ENCODE measurements at regions of chr6 and their contacts with region 1.

Region 1: DNA sequence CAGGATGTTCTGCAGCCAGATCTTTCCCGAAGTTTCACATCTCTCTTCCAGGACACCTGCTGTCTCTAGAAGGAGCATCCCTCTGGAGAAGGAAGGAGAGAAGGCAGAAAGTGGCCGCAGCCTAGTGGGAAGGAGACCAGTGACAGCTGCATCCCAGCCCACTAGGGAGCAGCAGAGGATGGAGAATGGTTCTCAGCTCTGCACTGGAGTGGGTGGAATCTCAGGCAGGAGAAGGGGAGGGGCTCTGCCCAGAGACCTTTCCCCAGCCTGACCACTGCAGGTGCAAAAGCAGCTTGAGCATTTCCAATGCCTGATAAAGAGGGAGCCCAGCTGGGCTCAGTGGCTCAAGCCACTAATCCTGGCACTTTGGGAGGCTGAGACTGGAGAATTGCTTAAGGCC is 32.3 kb downstream of the NCR2 start:
- DNase-seq: no peak
- H3K4me3 ChIP-seq: no peak overlapping the region
- H3K27me3 ChIP-seq: peaks cover 8% of the 10 kb centered on the region
- CTCF ChIP-seq: peak; percentile 82

Region 2: GRCh38 chr6:41027799-41028628 is 339.7 kb before region 1 on chr6:
- CTCF ChIA-PET with region 1: no interaction called
- POLR2A ChIA-PET with region 1: no interaction called
- DNase-seq: no peak
- H3K4me3 ChIP-seq: peak overlapping the region; percentile 30
- H3K27me3 ChIP-seq: peaks cover 2% of the 10 kb centered on the region; the same call in 1 of the 2 replicates
- CTCF ChIP-seq: peak; percentile 87

Region 3: GRCh38 chr6:41228616-41229015 is 139.1 kb before region 1 on chr6:
- CTCF ChIA-PET with region 1: no interaction called
- POLR2A ChIA-PET with region 1: no interaction called
- DNase-seq: no peak
- H3K4me3 ChIP-seq: no peak overlapping the region
- H3K27me3 ChIP-seq: no peaks in the 10 kb centered on the region; the same call in 1 of the 2 replicates
- CTCF ChIP-seq: no peak

Region 4: GRCh38 chr6:41352396-41352795 is 15.3 kb before region 1 on chr6:
- CTCF ChIA-PET with region 1: interaction called, 12 read pairs
- POLR2A ChIA-PET with region 1: no interaction called
- DNase-seq: no peak
- H3K4me3 ChIP-seq: no peak overlapping the region
- H3K27me3 ChIP-seq: peaks cover 7% of the 10 kb centered on the region
- CTCF ChIP-seq: no peak

Region 5: DNA sequence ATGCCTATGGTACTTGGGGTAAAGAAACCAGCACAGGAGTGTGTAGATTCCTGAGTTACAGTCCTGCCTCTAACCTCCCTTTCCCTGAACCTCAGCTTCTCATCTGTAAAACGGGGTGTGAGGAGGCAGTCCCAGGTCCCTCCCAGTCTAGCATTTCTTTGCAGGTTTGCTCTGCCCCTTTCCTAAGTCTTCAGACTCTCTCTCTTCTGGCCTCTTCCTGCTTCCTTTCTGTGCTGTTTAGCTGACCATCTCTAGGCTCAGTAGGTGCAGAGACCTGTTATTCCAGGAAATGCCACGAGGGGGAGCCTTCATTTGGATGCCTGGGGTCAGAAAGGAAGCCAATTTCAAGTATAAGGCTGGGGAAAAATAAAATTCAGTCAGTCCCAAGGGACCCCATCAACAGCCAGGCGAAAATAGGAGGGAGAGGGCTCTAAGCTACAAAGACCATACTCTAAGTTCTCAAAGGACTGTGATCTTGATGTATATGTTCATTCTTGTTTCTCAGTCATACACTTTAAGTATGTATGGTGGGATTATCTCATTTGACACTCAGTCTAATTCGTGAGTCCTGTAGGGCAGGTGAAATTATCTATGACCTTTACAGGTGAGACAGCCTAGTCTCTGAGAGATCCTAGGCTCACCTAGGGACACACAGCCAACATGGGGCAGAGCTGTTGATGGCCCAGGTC is 56.8 kb after region 1 on chr6:
- CTCF ChIA-PET with region 1: interaction called, 20 read pairs
- POLR2A ChIA-PET with region 1: no interaction called
- DNase-seq: peak; percentile 15
- H3K4me3 ChIP-seq: no peak overlapping the region
- H3K27me3 ChIP-seq: peaks cover 27% of the 10 kb centered on the region
- CTCF ChIP-seq: peak; percentile 86

Region 6: DNA sequence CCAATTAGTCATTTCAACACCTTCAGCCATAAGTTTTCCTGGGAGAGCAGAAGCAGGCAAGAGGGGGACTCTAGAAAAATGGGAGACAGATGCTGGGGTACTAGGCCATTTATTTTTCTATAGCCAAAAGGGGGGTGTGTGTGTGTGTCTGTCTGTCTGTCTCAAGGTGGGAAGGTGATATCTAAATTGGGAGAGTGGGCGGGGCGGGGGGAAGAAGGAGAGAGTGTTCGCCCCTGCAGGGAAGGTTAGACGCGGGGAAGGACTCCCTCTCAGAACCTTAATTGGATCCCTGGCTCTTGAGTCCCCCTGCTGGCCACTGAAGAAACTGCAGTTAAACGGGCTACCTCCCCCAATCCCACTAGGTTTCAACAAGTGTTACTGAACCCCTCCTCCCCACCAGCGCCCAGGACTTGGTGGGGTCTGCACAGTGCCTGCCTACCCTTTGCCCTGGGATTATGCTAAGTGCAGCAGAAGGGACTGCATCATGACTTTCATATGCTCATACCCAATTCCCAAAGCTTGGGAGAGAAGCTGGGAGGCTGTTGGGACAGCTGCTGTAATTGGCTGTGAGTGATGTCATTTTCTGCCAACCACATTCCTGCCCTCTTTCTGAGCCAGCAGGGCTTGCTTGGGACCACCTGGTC is 224.3 kb after region 1 on chr6:
- CTCF ChIA-PET with region 1: interaction called, 57 read pairs
- POLR2A ChIA-PET with region 1: no interaction called
- DNase-seq: no peak
- H3K4me3 ChIP-seq: no peak overlapping the region
- H3K27me3 ChIP-seq: no peaks in the 10 kb centered on the region
- CTCF ChIP-seq: peak; percentile 90

Region 7: DNA sequence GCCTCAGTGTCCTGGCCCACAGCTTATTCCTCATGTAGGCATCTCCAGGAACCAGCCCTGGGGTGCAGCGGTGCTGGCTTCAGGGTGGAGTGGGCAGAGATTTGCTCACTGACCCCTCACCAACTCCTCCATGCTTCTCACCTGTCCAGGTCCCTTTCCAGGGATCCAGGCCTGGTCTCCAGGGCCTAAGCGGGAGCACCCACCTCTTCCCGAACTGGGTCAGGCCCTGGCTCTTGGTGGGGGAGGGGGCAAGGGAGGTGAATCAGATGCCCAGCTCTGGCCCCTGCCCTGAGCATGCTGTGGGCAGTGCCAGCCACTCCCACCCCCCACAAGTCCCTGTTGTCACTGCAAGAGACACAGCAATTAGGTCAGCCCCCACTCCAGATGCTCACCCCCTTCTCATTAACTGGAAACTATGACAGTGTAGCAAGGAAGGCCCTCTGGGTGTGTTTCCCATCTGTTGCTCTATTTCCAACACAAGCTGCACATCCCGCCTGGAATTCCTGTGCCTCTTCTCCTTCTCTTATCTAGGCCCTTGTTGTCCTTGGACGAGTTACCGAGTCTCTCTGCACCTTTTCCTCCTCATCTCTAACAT is 307.6 kb after region 1 on chr6:
- CTCF ChIA-PET with region 1: interaction called, 113 read pairs
- POLR2A ChIA-PET with region 1: no interaction called
- DNase-seq: no peak
- H3K4me3 ChIP-seq: no peak overlapping the region
- H3K27me3 ChIP-seq: peaks cover 4% of the 10 kb centered on the region
- CTCF ChIP-seq: no peak

Region 8: DNA sequence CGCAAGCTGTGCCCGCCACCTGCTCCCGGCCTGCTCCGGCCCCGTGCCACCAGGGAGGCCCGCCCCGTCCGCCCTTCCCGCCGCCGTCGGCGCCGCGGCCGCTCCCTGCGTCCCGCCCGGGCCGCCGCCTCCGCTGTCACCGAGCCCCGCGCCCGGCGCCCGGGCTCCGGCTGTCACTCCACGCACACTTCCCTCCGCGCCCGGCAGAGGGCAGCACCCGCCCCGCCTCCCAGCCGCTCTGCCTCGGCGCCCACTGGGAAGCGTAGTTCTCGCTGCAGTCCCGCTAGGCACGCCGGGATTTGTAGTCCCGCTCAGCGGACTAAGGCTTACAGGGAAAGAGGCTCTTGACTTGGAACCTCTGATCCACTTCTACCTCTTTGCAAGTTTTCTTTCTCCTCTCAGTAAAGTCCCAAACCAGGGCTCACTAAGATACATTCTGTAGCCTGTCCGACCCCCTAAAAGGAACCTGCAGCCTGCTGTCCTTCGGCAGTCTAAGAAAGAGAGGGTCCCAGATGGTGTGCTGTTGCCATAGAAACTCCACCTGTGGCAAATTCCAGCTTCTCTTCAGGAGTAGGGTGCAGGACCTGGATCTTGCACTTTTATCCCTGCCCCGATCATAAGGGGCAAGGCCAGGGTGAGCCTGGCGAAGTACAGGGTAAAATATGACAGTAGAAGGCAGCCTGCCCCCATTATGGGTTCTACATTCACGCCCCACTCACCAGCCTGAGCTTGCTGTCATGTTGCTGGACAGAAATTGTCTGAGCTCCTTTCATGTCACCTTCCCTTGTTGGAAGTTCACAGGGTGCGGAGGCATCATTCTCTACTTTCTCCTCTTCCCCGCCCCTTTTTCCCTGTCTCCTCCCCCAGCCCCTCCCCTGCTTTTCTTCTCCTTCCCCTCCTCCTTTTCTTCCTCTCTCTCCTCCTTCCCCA is 368.0 kb after region 1 on chr6 and contains the start of gene TFEB:
- CTCF ChIA-PET with region 1: interaction called, 10 read pairs
- POLR2A ChIA-PET with region 1: no interaction called
- DNase-seq: peak; percentile 36
- H3K4me3 ChIP-seq: peak within 1 kb of the TSS; percentile 85
- H3K27me3 ChIP-seq: no peaks in the 10 kb centered on the region; the same call in 1 of the 2 replicates
- CTCF ChIP-seq: peak; percentile 84
- polyA plus RNA-seq, gene TFEB: 13.2 and 21.9 TPM in 2 replicates